Common myeloid progenitor, CD34-positive (primary cell): ENCODE measurements at regions of chr18 and their contacts with region 1.

Region 1: GRCh38 chr18:46173393-46174341 is 69.5 kb downstream of the HAUS1 start:
- DNase-seq: peak; percentile 95 to 98 (median 97)
- H3K4me3 ChIP-seq: peak overlapping the region; percentile 87 to 98 (median 90)
- H3K27ac ChIP-seq: peak overlapping the region; percentile 78 to 87
- H3K4me1 ChIP-seq: peaks cover 2 to 19% (median 11%) of the 10 kb centered on the region in 4 experiments
- H3K27me3 ChIP-seq: no peaks in the 10 kb centered on the region

Region 2: DNA sequence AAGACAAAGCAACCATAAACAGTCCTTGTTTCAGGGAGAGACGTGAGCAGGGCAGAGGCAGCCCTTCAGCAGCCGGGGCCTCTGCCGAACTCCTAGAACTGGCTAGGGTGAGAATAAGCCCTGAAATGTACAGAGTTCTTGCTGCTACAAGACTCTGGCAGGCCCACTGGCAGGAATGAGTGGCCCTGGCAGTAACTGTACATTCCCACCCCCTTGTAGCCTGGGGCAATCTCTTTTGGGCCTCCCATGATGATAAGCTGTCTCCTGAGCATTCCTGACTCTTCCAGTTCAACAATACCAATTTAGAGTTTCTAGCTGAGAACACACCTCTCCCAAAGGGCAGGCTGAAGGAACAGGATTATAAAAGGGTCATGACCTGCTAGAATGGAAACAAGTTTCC is 15.2 kb before region 1 on chr18:
- CTCF ChIA-PET with region 1: interaction called, 13 read pairs
- POLR2A ChIA-PET with region 1: no interaction called
- DNase-seq: no peak
- H3K4me3 ChIP-seq: no peak overlapping the region
- H3K27ac ChIP-seq: no peak overlapping the region
- H3K4me1 ChIP-seq: peaks cover 0 to 6% (median 1%) of the 10 kb centered on the region in 4 experiments
- H3K27me3 ChIP-seq: no peaks in the 10 kb centered on the region

Region 3: DNA sequence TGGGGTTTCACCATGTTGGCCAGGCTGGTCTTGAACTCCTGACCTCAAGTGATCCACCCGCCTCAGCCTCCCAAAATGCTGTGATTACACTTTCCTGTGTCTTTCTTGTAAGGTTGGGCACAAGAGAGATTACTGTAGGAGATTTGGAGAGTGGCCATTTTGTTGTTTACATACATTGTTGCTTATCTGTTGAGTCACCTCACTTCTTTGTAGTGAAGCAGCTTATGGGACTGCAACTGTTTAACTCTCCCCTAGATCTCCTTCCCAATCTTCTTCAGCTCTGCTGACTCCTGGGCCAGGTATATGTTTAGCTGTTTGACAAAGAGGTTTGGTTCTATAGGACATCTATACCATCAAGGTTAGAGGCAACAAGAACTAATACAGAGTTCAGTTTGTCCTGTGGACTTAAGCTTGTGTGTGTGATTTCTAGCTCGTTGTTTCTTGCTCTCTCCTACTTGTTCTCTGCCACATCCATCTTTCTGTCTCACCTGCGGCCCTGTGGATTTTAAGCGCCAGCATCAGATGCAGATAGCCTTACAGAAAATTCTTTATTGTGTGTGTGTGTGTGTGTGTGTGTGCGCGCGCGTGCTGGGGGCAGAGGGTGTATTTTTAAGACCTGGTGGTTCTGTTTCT is 26.0 kb after region 1 on chr18:
- CTCF ChIA-PET with region 1: interaction called, 26 read pairs
- POLR2A ChIA-PET with region 1: no interaction called
- DNase-seq: peak in 1 of 3 donors; percentile 37
- H3K4me3 ChIP-seq: no peak overlapping the region
- H3K27ac ChIP-seq: no peak overlapping the region
- H3K4me1 ChIP-seq: peaks cover 7 to 19% (median 11%) of the 10 kb centered on the region in 4 experiments
- H3K27me3 ChIP-seq: no peaks in the 10 kb centered on the region

Region 4: DNA sequence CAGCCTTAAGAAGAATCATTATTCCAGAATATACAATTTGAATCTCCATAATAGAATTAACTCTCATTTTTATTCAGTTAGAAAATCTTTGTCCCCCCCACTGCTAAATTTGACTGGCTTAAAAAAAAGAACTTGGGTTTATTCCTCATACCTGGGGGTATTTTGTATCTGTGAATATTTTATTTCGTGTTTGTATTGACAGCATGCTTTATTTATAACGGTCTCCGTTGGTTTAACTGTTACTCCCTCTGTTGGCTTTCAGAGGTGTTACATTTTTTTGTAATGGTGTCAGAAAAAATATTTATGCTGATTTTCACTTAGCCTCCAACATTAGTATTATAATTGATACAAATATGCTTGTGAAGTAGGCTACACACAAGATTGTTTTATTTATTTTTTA is 39.6 kb after region 1 on chr18:
- CTCF ChIA-PET with region 1: interaction called, 138 read pairs
- POLR2A ChIA-PET with region 1: interaction called, 7 read pairs
- DNase-seq: peak; percentile 39 to 58 (median 55)
- H3K4me3 ChIP-seq: peak overlapping the region in 1 of 7 experiments; percentile 26
- H3K27ac ChIP-seq: no peak overlapping the region
- H3K4me1 ChIP-seq: peaks cover 7 to 27% (median 20%) of the 10 kb centered on the region in 4 experiments
- H3K27me3 ChIP-seq: no peaks in the 10 kb centered on the region

Region 5: GRCh38 chr18:46222710-46223360 is 49.2 kb after region 1 on chr18:
- CTCF ChIA-PET with region 1: interaction called, 138 read pairs
- POLR2A ChIA-PET with region 1: no interaction called
- DNase-seq: peak; percentile 47 to 80 (median 67)
- H3K4me3 ChIP-seq: peak overlapping the region in 1 of 7 experiments; percentile 23
- H3K27ac ChIP-seq: no peak overlapping the region
- H3K4me1 ChIP-seq: peaks cover 4 to 20% (median 16%) of the 10 kb centered on the region in 4 experiments
- H3K27me3 ChIP-seq: no peaks in the 10 kb centered on the region

Region 6: DNA sequence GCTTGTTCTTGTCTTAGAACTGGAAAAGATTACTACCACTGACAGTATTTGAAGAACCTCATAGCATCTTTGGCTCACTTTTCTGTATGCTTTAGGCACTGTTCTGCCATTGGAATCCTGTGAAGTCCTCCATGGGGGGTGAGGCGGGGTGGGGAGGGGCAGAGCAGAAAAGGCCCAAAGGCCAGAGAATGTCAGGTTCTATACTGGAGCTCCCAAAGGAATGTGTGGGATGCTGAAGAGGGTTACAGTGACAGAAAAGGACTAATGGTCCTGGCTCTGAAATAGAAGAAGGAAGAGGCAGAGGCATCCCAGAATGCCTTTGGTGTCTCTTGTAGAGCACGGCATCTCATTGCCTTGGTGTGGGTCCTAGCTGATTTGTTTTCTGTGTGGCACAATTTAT is 72.4 kb after region 1 on chr18:
- CTCF ChIA-PET with region 1: interaction called, 10 read pairs
- POLR2A ChIA-PET with region 1: no interaction called
- DNase-seq: no peak
- H3K4me3 ChIP-seq: no peak overlapping the region
- H3K27ac ChIP-seq: no peak overlapping the region
- H3K4me1 ChIP-seq: peaks cover 10 to 18% (median 16%) of the 10 kb centered on the region in 4 experiments
- H3K27me3 ChIP-seq: no peaks in the 10 kb centered on the region

Region 7: GRCh38 chr18:46386788-46387187 is 213.1 kb after region 1 on chr18:
- CTCF ChIA-PET with region 1: no interaction called
- POLR2A ChIA-PET with region 1: no interaction called
- DNase-seq: no peak
- H3K4me3 ChIP-seq: no peak overlapping the region
- H3K27ac ChIP-seq: no peak overlapping the region
- H3K4me1 ChIP-seq: no peaks in the 10 kb centered on the region
- H3K27me3 ChIP-seq: peaks cover 0 to 3% (median 0%) of the 10 kb centered on the region in 5 experiments